ENCODE measurements at regions of chr2 and their contacts with region 1.

Region 1: GRCh38 chr2:168346725-168347477 is 99.5 kb upstream of the STK39 start:
- DNase-seq: peak; percentile 74
- H3K4me3 ChIP-seq: peak overlapping the region; percentile 33 to 62 (median 34)
- H3K27ac ChIP-seq: peak overlapping the region; percentile 26 to 78 (median 66)
- H3K4me1 ChIP-seq: peaks cover 0 to 19% (median 8%) of the 10 kb centered on the region in 4 donors
- H3K27me3 ChIP-seq: no peaks in the 10 kb centered on the region
- CTCF ChIP-seq: peak; percentile 83 to 94 (median 87)
- EP300 ChIP-seq: no peak
- POLR2A ChIP-seq: no peak

Region 2: DNA sequence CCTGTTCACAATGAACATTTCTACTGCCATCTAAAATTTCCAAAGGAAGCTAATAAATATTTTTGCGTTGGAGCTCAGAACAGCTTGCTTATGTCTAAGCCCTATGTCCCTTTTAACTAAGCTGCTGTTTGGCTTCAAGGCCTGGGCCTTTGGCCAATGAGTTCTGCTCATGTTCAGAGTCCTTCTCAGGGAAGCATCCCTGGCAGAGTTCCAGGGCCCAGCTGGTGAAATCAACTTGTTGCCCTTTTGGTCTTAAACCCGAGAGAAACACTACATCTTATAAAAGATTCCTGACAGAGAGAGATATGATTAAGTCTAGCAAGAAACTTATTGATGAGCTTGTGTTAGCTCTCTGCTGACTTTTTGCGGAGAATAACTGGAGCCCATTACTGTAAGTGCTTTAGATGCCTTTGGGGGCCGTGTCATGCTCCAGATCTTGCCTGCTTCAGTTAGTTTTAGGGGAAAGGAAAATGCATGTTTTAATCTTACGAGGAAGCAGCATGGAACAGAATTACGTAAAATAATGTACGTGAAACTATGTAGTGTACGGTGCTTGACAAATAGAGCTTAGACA is 353.0 kb after region 1 on chr2:
- in situ Hi-C with region 1: loop called in 2 of 4 experiments (anchors 10 to 25 kb)
- intact Hi-C with region 1: no loop called
- DNase-seq: peak; percentile 88
- H3K4me3 ChIP-seq: no peak overlapping the region
- H3K27ac ChIP-seq: peak overlapping the region; percentile 72 to 84 (median 81)
- H3K4me1 ChIP-seq: peaks cover 11 to 70% (median 40%) of the 10 kb centered on the region in 4 donors
- H3K27me3 ChIP-seq: no peaks in the 10 kb centered on the region
- CTCF ChIP-seq: no peak
- EP300 ChIP-seq: peak; percentile 42
- POLR2A ChIP-seq: no peak

Region 3: DNA sequence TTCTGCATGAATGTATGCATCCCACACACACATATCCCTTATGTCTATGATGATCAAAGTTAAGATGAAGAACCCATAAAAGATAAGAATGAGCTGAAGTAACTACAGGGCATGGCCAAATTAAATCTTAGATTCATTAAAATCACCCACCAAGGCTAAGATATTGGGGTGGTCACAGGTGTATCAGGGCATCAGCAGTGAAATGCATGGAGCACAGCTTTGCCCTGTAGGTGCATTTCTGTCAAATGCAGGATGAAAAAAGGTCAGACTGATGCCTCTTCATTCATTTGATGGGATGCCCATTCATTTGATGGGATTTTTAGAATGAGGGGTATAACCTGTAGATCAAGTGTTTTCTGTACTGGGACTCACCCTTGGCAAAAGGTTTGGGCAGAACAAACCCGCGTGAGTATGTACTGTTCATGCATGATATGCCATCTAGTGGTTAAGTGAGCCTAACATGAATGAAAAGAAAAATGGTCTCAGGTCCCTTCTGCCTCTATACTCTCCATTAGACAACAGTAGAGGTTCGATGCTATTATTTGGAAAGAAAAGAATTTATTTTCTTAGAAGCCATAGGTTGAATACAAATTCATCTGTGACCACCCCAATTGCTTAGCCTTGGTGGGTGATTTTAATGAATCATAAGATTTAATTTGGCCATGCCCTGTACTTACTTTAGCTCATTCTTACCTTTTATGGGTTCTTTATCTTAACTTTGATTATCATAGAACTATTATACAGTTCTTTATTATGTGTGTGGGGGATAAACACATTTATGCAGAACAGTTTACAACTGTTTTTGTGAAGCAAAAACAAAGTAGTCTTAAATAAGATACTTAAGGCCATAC is 412.3 kb after region 1 on chr2:
- in situ Hi-C with region 1: loop called in 2 of 4 experiments (anchors 5 to 25 kb)
- intact Hi-C with region 1: loop called (anchors 5 kb)
- DNase-seq: no peak
- H3K4me3 ChIP-seq: no peak overlapping the region
- H3K27ac ChIP-seq: no peak overlapping the region
- H3K4me1 ChIP-seq: peaks cover 0 to 20% (median 6%) of the 10 kb centered on the region in 4 donors
- H3K27me3 ChIP-seq: no peaks in the 10 kb centered on the region
- CTCF ChIP-seq: peak; percentile 48 to 71 (median 60)
- EP300 ChIP-seq: no peak
- POLR2A ChIP-seq: no peak

Region 4: GRCh38 chr2:168920504-168921157 is 573.7 kb after region 1 on chr2:
- in situ Hi-C with region 1: loop called (anchors 5 to 25 kb)
- intact Hi-C with region 1: loop called (anchors 5 kb)
- DNase-seq: no peak
- H3K4me3 ChIP-seq: no peak overlapping the region
- H3K27ac ChIP-seq: no peak overlapping the region
- H3K4me1 ChIP-seq: no peaks in the 10 kb centered on the region
- H3K27me3 ChIP-seq: no peaks in the 10 kb centered on the region
- CTCF ChIP-seq: peak; percentile 58 to 73 (median 69)
- EP300 ChIP-seq: no peak
- POLR2A ChIP-seq: no peak